Posterior cingulate gyrus (tissue), 11 donors: ENCODE measurements at regions of chr19 and their contacts with region 1.

Region 1: DNA sequence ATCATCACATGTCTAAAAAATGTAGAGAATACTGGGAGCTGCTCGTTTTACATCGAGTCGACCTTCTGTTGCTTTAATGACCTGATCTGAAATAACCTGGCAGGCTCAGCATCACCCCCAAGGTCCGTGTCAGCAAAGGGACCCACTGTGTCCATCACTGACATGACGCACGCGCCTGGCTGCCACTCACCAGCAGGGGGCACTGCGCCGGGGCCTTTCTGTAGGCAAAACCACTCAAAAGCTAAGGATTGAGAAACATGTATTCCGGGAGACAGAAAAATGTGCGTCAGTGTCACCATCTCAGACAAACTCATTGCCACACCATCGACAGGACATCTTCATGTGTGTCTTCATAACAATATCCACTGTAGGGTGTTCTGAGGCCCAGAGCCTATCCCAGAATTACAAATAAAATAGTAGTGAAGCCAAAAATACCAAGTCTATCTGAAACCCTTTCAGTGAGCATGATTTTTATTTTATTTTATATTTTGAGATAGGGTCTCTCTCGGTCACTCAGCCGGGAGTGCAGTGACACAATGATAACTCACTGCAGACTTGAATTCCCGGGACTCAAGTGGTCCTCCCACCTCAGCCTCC is 130.3 kb upstream of the LSM14A start:
- DNase-seq: peak; percentile 19 to 95 (median 76)

Region 2: GRCh38 chr19:33953592-33953991 is 88.4 kb before region 1 on chr19:
- intact Hi-C with region 1: no loop called
- DNase-seq: no peak

Region 3: DNA sequence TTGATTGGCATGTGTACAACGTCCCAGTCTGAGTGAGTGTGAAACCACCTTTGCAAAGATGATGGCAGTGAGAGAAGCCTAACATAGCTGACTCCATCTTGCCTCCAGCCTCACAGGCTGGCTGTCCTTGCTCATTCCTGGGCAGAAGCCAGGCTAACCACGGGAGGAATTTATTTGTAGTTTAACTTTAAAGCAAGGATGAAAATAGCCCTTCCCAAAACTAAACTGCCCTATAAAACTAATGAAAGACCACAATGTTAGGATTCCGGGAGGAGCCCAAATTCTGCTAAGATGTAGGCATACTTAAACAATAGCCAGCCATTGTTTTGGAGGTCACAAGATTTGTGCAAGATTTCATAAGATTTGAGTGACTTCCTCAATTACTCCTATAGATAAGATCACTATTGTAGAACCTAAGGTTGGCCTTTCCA is 33.7 kb after region 1 on chr19:
- intact Hi-C with region 1: no loop called
- DNase-seq: no peak

Region 4: DNA sequence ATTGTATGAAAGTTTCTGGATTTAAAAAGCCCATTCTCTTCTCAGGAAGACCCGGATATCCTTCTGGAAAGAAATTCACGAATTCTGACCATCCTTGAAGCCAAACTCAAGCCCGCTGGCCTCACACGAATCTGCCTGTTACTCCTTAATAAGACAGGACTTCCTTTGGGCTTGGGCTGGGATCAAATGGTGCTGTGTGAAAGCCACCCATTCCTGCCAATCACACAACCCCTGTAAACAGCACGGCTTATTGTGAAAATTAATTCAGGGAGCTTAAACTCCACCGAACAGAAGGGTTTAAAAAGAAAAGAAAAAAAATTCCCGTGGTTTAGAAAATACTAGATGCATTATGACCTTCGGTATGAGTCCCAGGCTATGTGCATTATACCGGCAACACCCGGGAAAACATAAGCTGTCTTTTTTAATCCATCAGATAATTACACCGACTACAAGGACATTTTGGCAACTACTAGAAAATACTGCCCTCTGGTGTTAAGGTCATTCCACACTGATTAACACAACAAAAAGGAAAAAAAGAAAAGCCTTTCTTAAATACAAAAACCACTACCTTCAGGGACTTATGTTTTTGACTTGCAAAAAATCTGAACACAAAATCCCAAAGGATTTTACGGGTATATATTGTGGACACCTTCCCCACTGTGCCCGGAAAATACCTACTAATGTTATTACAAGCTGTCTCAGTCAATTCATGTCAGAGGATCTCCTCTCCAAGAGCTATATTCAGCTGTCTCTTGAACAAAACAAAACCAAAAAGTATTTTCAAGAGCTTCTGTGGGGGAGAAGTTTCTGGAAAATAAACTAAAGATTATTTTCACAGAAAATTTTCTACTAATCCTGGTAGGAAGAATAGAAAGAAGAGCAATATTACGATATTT is 54.2 kb after region 1 on chr19:
- intact Hi-C with region 1: loop called (anchors 5 kb)
- DNase-seq: no peak

Region 5: DNA sequence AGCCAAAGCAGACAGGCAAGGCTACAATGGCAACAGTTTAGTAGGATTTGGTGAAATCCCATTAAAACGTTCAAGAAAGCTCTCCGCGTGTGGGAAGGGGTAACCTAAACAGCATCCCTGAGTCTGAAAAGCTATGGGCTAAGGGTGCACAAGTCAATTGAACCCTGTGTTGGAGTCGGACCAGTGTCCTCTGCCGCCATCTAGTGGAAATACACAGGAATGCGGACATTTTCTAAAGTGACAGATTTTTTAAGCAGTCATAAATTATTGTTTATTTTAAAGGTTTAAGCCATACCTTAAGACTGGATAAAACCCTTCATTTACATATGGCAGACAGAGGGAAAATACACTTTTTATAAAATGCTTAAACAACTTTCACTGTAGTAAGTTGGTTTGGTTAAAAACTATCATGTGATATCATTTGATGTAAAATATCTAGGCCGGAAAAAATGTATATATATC is 103.7 kb after region 1 on chr19:
- intact Hi-C with region 1: loop called (anchors 1 kb)
- DNase-seq: peak in 6 of 10 donors; percentile 16 to 85 (median 47)